Sciatic nerve (tissue), 2 donors: ENCODE measurements at regions of chr18 and their contacts with region 1.

Region 1: DNA sequence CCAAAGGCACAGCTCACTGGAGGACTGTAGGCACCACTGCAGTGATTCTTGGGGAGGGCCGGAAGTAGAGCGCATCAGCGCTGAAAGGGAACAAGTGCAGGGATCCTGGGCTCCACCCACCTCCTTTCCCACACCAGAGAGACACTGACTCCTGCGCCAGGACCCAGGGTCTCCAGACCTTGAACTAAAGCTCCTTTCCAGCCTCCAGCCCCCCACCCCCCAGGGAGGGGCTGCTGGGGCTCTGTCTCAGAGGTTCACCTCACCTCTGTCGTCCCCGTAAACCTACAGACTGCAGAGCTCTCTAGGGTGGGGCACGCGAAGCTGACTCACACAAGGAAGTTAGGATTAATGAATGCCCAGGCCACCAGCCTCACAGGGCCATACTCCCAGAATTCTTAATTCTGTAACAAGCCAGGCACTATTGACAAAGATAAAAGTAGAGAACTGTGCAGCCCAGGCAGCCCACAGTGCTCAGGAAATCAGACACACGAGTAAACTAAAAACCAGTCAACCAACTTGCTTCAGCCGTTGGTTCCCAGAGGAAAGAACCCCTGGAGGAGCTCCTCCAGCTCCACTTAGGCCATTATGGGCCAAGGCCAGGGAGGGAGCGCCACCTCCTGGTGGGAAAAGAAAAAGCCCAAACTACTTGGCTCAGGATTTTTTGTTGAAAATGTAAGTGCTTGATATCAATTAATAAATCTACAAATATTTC is 45.1 kb upstream of the ACAA2 start:
- DNase-seq: peak; percentile 78
- ATAC-seq: peak; percentile 55

Region 2: DNA sequence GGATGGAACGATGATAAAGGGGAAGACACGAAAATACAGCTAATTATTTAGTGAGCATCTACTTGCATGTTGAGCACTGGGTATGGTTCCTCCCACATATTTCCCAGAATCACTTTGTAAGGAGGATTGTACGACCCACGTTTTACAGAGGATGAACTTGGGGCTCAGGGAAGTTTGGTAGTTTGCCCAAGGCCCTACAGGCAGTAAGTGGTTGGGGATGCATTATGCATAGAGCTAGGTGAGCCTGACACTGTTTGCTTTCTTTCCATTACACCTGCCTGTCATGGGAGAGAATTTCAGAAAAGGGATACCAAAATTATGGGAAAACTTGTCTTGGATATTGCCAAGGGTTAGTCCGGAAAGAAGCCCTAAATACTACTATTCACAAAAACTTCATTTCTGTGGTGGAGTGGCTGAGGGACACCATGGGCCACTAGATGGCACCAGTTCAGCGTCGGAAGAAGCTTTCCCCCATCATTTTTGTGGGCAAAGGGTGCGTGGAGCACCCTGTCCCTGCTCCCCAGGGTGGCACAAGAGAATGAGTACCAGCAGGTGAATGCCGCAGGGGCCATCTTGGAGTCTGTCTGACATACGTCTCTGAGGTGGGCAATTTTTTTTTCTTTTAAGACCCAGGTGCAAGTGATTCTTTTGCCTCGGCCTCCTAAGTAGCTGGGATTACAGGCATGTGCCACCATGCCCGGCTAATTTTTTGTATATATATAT is 347.9 kb before region 1 on chr18:
- intact Hi-C with region 1: loop called (anchors 5 kb)
- DNase-seq: peak; percentile 66
- ATAC-seq: peak; percentile 67

Region 3: DNA sequence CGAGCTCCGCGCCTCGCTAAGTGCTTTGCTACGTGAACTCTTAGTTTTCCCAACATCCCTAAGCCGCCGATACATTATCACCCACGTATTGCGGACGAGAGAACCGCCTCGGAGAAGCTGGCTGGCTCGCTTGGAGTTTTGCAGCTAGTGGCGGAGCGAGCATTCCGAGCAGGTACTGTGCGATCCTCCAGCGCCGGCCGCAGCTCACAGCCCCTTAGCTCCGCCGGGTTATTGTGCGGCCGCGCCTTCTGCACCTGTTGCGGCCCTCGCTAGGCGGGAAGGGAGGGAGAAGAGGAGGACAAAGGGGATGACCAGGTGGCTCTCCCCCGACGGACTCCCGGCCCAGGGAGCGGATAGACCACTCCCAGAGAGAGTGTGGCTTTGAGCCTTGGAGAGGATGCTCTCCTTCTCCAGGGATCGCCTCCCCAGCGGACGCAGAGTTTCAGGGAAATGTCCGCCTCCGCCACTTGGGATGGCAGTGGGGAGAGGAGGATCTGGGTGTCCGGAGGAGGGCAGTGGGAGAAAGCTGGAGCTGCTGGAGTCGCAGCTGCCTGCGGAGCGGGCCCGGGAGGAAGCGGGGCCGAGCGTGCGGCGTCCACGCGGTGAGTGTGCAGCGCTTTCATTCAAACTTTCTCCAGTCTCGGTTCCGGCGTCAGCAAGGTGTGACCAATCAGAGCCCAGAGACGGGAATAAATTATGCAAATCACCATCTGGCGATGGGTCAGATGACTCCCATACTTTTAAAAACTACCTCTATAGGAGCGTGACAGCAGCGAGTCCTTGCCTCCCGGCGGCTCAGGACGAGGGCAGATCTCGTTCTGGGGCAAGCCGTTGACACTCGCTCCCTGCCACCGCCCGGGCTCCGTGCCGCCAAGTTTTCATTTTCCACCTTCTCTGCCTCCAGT is 296.9 kb before region 1 on chr18 and contains the start of gene LIPG:
- intact Hi-C with region 1: loop called (anchors 10 kb)
- DNase-seq: no peak
- ATAC-seq: peak; percentile 49
- total RNA-seq, gene LIPG: 5.8 TPM

Region 4: DNA sequence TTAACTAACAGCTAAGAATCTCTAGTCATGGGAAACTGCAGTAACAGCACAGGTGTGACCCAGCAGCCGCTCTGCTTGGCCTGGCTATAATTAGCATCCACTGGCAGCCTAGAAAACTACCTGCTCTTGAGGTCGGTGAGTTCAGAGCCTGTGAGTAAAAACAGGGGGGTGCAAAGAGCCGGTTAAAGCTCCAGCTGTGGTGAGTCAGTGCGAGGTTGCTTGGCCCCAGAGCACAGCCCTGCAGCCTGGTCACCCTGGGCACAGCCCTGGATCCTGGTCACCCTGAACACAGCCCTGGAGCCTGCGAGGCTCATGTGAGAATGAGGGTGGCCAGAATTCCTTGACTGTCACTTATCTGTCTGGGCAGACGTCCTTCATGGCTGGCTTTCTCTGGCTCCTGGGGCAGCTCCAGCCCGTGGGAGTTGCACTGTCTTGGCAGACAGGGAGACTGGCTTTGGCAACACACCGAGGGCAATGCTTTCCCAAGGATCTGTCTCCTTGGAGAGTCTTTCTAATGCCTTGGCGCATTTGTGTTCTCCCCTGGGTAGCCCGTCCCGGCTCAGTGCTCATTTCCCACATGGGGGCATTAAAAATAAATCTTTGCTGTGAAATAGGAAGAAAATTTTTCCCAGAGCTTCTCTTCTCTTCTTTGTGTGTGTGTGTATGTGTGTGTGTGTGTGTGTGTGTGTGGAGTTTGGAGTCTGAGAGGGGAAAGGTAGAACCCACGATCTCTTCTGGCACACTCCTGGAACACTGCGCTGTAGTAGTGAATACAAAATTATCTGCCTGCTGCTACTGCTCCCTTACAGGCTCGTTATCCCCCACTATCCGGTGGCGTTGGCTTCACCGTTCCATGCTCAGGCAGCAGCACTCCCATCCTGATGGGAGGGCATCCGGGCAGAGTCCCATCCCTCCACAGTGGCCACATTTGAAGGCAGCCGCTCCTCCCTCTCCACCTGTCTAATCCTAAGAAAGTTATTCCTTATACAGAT is 1589.2 kb after region 1 on chr18:
- intact Hi-C with region 1: loop called (anchors 5 kb)
- DNase-seq: no peak
- ATAC-seq: peak; percentile 20